Left lung (tissue), 14 donors: ENCODE measurements at regions of chr3 and their contacts with region 1.

Region 1: GRCh38 chr3:58013973-58014649 is 5.9 kb downstream of the FLNB start:
- DNase-seq: peak in 1 of 4 donors; percentile 37
- ATAC-seq: peak; percentile 20
- H3K4me3 ChIP-seq: no peak overlapping the region
- H3K27ac ChIP-seq: no peak overlapping the region
- H3K4me1 ChIP-seq: peaks cover 14 to 45% of the 10 kb centered on the region in 2 donors
- H3K27me3 ChIP-seq: no peaks in the 10 kb centered on the region
- CTCF ChIP-seq: no peak

Region 2: GRCh38 chr3:57927916-57928315 is 86.2 kb before region 1 on chr3:
- intact Hi-C with region 1: no loop called
- DNase-seq: no peak
- ATAC-seq: no peak
- H3K4me3 ChIP-seq: no peak overlapping the region
- H3K27ac ChIP-seq: no peak overlapping the region
- H3K4me1 ChIP-seq: no peaks in the 10 kb centered on the region
- H3K27me3 ChIP-seq: no peaks in the 10 kb centered on the region
- CTCF ChIP-seq: no peak

Region 3: DNA sequence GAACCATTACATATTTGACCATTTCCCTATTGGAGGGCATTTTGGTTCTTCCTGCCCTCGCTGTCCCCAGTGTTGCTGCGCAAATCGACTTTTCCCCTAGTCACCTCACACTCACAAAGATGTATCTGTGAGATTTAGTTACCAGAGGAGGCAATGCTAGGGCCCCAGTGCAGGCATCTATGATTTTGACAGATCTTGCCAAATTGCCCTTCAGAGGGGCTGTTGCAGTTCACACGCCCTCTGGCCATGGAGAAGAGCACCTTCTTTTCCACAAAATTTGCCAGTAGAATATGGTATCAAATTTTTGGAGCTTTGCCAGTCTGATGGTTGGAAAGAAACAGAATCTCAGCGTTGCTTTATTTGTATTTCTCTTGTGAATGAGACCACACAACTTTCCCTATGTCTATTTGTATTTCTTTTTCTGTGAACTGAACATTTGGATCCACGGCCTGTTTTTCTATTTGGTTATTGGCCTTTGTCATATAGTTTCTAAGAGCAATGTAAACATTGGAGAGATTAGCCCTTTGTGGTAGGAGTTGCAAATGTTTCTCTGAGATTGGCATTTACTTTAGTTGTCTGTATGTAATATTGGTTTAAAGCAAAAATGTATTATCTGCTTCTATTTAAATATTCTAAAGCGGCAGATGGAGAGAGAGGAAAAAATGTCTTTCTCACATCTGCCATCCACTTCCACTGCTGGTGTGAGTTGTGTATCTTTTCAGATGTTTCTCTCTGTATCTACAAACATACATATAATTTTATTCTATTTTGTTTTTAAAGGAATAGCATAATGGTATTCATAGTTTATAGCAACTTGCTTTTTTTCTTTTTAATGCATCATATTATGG is 130.6 kb after region 1 on chr3:
- intact Hi-C with region 1: no loop called
- DNase-seq: no peak
- ATAC-seq: no peak
- H3K4me3 ChIP-seq: no peak overlapping the region
- H3K27ac ChIP-seq: no peak overlapping the region
- H3K4me1 ChIP-seq: no peaks in the 10 kb centered on the region
- H3K27me3 ChIP-seq: no peaks in the 10 kb centered on the region
- CTCF ChIP-seq: no peak

Region 4: GRCh38 chr3:58167431-58168351 is 153.6 kb after region 1 on chr3:
- intact Hi-C with region 1: loop called in 1 of 2 experiments (anchors 10 kb)
- DNase-seq: peak in 3 of 4 donors; percentile 56 to 82 (median 76)
- ATAC-seq: peak; percentile 72
- H3K4me3 ChIP-seq: no peak overlapping the region
- H3K27ac ChIP-seq: no peak overlapping the region
- H3K4me1 ChIP-seq: peaks cover 15 to 20% of the 10 kb centered on the region in 2 donors
- H3K27me3 ChIP-seq: no peaks in the 10 kb centered on the region
- CTCF ChIP-seq: peak; percentile 85 to 90